AG04450 (cell line): ENCODE measurements at regions of chr12 and their contacts with region 1.

Region 1: DNA sequence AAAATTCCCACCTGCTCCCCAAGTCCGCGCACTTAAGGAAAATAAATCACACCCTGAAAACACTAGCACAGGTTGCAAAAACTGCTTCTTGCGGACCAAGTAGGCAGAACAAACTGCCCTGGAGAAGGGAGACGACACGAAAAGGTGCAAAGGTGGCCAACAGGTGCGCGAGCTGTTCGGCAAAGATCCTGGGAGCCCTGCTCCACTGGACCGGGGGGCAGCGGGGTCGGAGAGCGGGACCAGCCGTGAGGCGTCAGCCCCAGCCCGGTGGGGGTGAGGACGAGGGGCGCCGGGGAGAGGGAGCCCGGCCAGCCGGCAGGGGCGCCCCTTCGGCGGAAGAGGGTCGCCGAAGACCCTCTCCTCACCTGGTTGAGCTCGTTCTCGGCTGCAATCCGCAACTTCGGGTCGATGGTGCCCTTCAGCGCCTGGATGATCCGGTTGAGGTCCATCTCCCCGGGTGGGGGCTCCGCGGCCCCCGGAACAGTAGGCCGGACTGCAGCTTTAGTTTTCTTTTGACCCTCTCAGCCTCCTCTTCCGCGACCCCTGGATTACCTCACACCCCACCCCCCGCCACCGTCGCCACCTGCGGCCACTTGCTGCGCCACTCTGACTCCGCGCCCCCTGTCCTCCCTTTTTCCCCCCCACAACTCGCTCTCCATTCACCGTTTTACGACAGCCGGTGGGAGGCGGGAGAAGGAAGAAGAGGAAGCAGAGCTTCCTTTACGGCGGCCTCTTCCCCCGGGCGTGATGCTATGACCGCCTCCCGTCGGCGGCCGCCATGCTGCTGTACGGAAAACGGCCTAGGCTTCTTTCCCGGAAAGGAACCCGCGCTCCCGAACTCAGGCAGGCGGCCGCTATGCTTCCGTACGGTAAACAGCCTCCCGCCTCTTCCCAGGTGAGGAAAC is at the start of gene IPO8:
- DNase-seq: peak; percentile 73
- H3K4me3 ChIP-seq: peak within 1 kb of the TSS; percentile 94
- H3K27ac ChIP-seq: no peak within 1 kb of the TSS
- H3K27me3 ChIP-seq: no peaks in the 10 kb centered on the region
- CTCF ChIP-seq: peak; percentile 42
- polyA plus RNA-seq, gene IPO8: 19.6 and 21.2 TPM in 2 replicates

Region 2: GRCh38 chr12:30610711-30611110 is 84.7 kb before region 1 on chr12:
- CTCF ChIA-PET with region 1: no interaction called
- POLR2A ChIA-PET with region 1: interaction called, 10 read pairs
- DNase-seq: no peak
- H3K4me3 ChIP-seq: no peak overlapping the region
- H3K27ac ChIP-seq: no peak overlapping the region
- H3K27me3 ChIP-seq: no peaks in the 10 kb centered on the region
- CTCF ChIP-seq: no peak

Region 3: GRCh38 chr12:30725739-30726138 is 30.3 kb after region 1 on chr12:
- CTCF ChIA-PET with region 1: interaction called, 10 read pairs
- POLR2A ChIA-PET with region 1: no interaction called
- DNase-seq: peak; percentile 21
- H3K4me3 ChIP-seq: no peak overlapping the region
- H3K27ac ChIP-seq: no peak overlapping the region
- H3K27me3 ChIP-seq: no peaks in the 10 kb centered on the region
- CTCF ChIP-seq: no peak

Region 4: DNA sequence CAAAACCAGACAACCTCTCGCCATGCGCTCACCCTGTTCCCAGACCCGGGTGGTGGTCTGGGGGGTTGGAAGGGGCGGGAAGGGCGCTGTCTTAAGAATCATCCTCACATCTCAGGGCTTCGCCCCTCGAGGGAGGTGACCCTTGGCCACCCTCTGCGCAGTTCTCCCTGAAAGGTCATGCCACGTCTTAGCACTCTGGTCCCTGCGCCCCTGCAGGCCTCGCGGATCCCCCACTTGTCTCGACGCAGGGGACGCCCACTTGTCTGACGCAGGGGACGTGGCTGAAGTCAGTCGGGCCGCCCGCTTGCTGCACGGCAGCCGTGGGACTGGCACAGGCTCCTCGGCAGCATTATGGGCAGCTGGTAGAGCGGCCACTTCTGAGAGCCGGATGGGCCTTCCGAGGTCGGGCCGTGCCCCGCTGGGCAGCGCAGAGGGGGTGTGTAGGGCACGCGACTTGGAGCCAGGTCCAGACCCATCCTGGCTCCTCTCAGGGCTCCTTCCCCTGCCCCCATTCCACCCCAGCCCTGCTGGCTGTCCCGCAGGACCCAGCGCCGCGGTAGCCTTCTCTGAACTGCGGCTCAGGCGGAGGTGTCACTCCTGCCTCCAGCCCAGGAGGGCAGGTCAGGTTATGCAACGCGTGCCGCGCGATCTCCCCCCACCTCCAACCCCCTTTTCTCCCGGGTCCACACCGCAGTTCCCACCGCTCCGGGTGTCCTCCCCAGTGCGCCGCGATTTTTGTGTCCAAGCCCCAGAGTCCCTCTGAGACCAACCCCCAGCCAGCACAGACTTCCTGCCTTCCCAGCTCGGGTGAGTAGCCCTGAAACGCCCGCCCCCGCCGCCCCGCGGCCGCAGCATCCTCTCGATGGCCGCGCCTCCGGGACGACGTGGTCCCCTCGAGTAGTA is 100.2 kb after region 1 on chr12:
- CTCF ChIA-PET with region 1: interaction called, 3 read pairs
- POLR2A ChIA-PET with region 1: interaction called, 11 read pairs
- DNase-seq: no peak
- H3K4me3 ChIP-seq: peak overlapping the region; percentile 77
- H3K27ac ChIP-seq: peak overlapping the region; percentile 96
- H3K27me3 ChIP-seq: no peaks in the 10 kb centered on the region
- CTCF ChIP-seq: peak; percentile 10; the same call in 1 of the 2 replicates

Region 5: DNA sequence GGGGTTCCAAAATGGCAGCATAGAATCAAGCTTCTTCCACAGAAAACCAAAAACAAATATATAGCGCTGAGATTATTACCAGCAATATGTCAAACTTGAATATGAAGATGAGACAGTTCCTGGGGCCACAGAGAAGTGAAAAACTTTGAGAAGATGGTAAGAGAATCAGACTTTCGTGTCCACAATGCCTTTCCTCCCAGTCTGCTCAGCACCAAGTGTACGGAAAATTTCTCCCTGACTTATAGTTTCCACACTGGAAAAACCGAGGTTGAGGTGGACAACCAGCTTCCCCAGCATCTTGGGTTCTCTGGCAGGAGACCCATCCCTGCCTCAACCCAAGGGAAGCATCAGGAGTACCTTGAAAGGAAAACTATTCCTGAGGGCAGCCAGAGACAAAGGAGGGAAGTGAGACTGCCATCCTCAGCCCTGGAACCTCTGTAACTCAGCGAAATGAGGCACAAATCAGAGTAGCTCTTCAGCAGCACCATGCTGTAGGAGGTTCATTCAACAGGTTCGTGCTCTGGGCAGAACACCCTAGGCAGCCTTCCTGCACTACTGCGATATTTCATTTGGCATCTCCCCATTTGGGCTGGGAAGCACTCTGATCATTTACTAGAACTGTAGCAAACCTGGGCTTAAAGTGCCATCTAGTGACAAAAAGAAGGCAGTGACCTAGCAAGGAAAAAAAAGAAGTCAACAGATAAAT is 111.7 kb after region 1 on chr12:
- CTCF ChIA-PET with region 1: interaction called, 14 read pairs
- POLR2A ChIA-PET with region 1: no interaction called
- DNase-seq: no peak
- H3K4me3 ChIP-seq: no peak overlapping the region
- H3K27ac ChIP-seq: no peak overlapping the region
- H3K27me3 ChIP-seq: no peaks in the 10 kb centered on the region
- CTCF ChIP-seq: peak; percentile 80

Region 6: GRCh38 chr12:30882706-30883105 is 187.3 kb after region 1 on chr12:
- CTCF ChIA-PET with region 1: no interaction called
- POLR2A ChIA-PET with region 1: no interaction called
- DNase-seq: no peak
- H3K4me3 ChIP-seq: no peak overlapping the region
- H3K27ac ChIP-seq: no peak overlapping the region
- H3K27me3 ChIP-seq: peaks cover 15% of the 10 kb centered on the region
- CTCF ChIP-seq: no peak